ENCODE measurements at regions of chr22 and their contacts with region 1.

Region 1: GRCh38 chr22:31872209-31872608 is 72.1 kb upstream of the YWHAH start:
- DNase-seq: peak in 4 of 5 donors; percentile 6 to 14 (median 10)
- H3K4me3 ChIP-seq: no peak overlapping the region
- H3K4me3 Mint-ChIP-seq: no peak overlapping the region
- H3K27ac ChIP-seq: no peak overlapping the region
- H3K27ac Mint-ChIP-seq: peak overlapping the region in 1 of 7 donors; percentile 15
- H3K4me1 ChIP-seq: no peaks in the 10 kb centered on the region
- H3K4me1 Mint-ChIP-seq: peaks cover 0 to under 1% (median 0%) of the 10 kb centered on the region in 4 donors
- H3K27me3 ChIP-seq: no peaks in the 10 kb centered on the region
- H3K27me3 Mint-ChIP-seq: no peaks in the 10 kb centered on the region

Region 2: DNA sequence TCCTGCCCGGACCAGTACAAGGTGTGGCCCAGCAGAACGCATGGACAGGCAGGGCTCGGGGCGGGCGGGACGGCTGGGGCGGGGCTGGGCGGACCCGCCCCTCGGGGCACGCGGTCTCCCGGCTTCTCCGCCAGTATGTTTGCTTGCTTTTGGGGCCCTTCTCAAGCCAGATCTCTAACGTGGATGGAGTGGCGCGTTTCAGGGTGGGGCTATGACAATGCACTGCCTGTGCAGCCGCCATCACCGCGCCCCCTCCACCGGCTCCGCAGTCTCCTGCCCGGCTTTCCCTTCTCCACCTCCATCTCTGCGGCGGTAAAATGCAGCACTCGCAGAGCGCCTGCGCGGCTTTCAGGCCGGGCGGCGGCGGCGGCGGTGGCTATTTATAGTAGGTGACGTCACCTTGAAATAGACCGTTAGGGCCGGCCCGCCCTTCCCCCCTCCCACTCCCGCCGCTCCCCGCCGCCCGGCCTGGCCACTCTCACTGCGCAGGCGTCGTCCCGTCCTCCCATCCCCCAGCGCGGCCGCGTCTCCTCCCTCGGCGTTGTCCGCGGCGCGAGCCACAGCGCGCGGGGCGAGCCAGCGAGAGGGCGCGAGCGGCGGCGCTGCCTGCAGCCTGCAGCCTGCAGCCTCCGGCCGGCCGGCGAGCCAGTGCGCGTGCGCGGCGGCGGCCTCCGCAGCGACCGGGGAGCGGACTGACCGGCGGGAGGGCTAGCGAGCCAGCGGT is 71.9 kb after region 1 on chr22 and contains the start of gene YWHAH:
- CTCF ChIA-PET with region 1: interaction called, 11 read pairs
- POLR2A ChIA-PET with region 1: no interaction called
- intact Hi-C with region 1: loop called (anchors 1 kb)
- DNase-seq: peak; percentile 86 to 89 (median 86)
- H3K4me3 ChIP-seq: peak within 1 kb of the TSS; percentile 55 to 67
- H3K4me3 Mint-ChIP-seq: peak within 1 kb of the TSS; percentile 91 to 97 (median 94)
- H3K27ac ChIP-seq: peak within 1 kb of the TSS; percentile 77
- H3K27ac Mint-ChIP-seq: peak within 1 kb of the TSS in 6 of 7 donors; percentile 94 to 98 (median 96)
- H3K4me1 ChIP-seq: peaks cover 33% of the 10 kb centered on the region
- H3K4me1 Mint-ChIP-seq: peaks cover 10 to 25% (median 17%) of the 10 kb centered on the region in 4 donors
- H3K27me3 ChIP-seq: no peaks in the 10 kb centered on the region
- H3K27me3 Mint-ChIP-seq: no peaks in the 10 kb centered on the region
- total RNA-seq, gene YWHAH: 48.0 to 57.0 TPM

Region 3: GRCh38 chr22:31952459-31952858 is 80.2 kb after region 1 on chr22:
- CTCF ChIA-PET with region 1: interaction called, 11 read pairs
- POLR2A ChIA-PET with region 1: no interaction called
- intact Hi-C with region 1: loop called (anchors 1 kb)
- DNase-seq: no peak
- H3K4me3 ChIP-seq: no peak overlapping the region
- H3K4me3 Mint-ChIP-seq: peak overlapping the region in 4 of 8 donors; percentile 52 to 67 (median 62)
- H3K27ac ChIP-seq: peak overlapping the region; percentile 61
- H3K27ac Mint-ChIP-seq: peak overlapping the region; percentile 71 to 97 (median 89)
- H3K4me1 ChIP-seq: peaks cover 79% of the 10 kb centered on the region
- H3K4me1 Mint-ChIP-seq: peaks cover 57 to 75% (median 66%) of the 10 kb centered on the region in 4 donors
- H3K27me3 ChIP-seq: no peaks in the 10 kb centered on the region
- H3K27me3 Mint-ChIP-seq: no peaks in the 10 kb centered on the region